A673 (cell line): ENCODE measurements at regions of chr5 and their contacts with region 1.

Region 1: DNA sequence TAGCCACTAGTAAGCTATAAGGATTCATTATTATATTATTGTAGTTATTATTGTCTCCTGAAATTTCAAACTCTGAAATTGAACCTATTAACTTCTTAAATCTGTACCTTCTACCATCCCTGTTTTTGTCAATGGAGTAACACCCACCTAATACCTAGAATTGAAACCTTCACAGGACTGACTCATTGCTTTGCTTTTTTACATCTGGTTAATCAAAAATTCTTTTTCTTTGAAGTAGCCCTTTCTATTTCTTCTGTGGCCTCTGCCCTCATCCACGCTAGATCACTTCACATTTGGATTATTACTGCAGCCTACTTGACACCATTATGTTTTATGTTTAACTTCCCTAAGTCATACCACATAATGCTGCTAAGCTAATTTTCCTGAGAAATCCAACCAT is 35.6 kb downstream of the RBM27 start:
- DNase-seq: no peak
- H3K4me3 ChIP-seq: no peak overlapping the region
- H3K27ac ChIP-seq: no peak overlapping the region
- H3K4me1 ChIP-seq: peaks cover 17% of the 10 kb centered on the region
- H3K27me3 ChIP-seq: no peaks in the 10 kb centered on the region
- CTCF ChIP-seq: no peak

Region 2: DNA sequence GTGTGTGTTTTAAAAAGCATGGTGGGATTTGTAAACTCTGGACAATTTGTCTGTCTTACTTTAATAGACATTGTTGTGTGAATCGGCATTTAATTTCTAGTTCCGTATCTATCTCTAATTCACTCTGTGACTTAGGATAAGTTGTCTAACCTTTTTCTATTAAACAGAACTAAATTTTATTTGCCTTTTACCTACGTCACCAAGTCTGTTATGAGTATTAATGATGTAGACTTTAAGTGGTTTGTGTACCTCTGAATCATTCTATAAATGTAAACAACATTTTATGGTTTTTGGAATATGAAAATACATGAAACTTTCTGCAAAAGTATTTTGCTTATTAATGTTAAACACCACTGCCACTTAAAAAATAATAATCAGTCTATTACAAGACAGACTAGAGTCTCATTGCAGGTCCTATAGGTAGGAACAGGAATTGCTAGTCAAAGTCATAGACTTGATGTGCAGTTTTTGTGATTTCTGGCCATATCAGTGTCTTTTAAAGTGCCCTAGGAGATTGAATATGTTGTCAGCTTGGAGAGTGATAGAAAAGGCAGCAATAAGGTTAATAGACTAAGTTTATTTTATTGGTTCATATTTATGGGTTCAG is 30.0 kb before region 1 on chr5:
- CTCF ChIA-PET with region 1: interaction called, 10 read pairs
- POLR2A ChIA-PET with region 1: no interaction called
- intact Hi-C with region 1: no loop called
- DNase-seq: no peak
- H3K4me3 ChIP-seq: no peak overlapping the region
- H3K27ac ChIP-seq: no peak overlapping the region
- H3K4me1 ChIP-seq: peaks cover 10% of the 10 kb centered on the region
- H3K27me3 ChIP-seq: no peaks in the 10 kb centered on the region
- CTCF ChIP-seq: 0 out of 2 replicates have a peak, but pooled peaks have one; percentile 26

Region 3: DNA sequence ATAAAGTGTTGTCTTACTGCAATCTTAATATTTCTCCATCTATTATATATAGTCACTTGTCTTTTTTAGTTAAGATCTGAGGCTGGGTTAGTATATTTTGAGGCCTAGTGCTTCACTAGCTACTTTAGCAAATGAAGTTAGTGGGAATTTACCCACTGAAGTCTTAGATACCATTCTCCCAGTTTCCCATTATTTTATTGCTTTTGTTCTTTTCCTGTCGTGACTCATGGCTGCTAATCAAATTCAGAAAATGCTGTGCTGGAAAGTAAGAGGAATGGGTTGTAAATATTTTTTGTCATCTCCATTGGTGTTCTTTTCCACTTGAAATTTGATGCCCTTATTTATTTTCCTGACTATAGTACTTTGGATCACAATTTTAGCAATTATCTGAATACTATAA is 222.3 kb after region 1 on chr5:
- CTCF ChIA-PET with region 1: no interaction called
- POLR2A ChIA-PET with region 1: no interaction called
- intact Hi-C with region 1: no loop called
- DNase-seq: peak; percentile 43
- H3K4me3 ChIP-seq: no peak overlapping the region
- H3K27ac ChIP-seq: peak overlapping the region; percentile 50
- H3K4me1 ChIP-seq: peaks cover 13% of the 10 kb centered on the region
- H3K27me3 ChIP-seq: no peaks in the 10 kb centered on the region
- CTCF ChIP-seq: no peak